ENCODE measurements at regions of chr1 and their contacts with region 1.

Region 1: GRCh38 chr1:35557292-35558063 is at the starts of genes KIAA0319L and NCDN:
- DNase-seq: peak; percentile 90 to 97 (median 94)
- ATAC-seq: peak; percentile 89
- H3K4me3 ChIP-seq: peak within 1 kb of the TSS; percentile 98
- H3K4me3 Mint-ChIP-seq: peak within 1 kb of the TSS; percentile 100
- H3K27ac ChIP-seq: peak within 1 kb of the TSS; percentile 77 to 84
- H3K27ac Mint-ChIP-seq: peak within 1 kb of the TSS; percentile 97
- H3K4me1 ChIP-seq: peaks cover 48% of the 10 kb centered on the region
- H3K4me1 Mint-ChIP-seq: peaks cover 75% of the 10 kb centered on the region
- H3K27me3 ChIP-seq: no peaks in the 10 kb centered on the region
- H3K27me3 Mint-ChIP-seq: no peaks in the 10 kb centered on the region
- CTCF ChIP-seq: no peak
- total RNA-seq, gene KIAA0319L: 50.9 to 53.3 TPM
- total RNA-seq, gene NCDN: 12.8 to 14.2 TPM

Region 2: DNA sequence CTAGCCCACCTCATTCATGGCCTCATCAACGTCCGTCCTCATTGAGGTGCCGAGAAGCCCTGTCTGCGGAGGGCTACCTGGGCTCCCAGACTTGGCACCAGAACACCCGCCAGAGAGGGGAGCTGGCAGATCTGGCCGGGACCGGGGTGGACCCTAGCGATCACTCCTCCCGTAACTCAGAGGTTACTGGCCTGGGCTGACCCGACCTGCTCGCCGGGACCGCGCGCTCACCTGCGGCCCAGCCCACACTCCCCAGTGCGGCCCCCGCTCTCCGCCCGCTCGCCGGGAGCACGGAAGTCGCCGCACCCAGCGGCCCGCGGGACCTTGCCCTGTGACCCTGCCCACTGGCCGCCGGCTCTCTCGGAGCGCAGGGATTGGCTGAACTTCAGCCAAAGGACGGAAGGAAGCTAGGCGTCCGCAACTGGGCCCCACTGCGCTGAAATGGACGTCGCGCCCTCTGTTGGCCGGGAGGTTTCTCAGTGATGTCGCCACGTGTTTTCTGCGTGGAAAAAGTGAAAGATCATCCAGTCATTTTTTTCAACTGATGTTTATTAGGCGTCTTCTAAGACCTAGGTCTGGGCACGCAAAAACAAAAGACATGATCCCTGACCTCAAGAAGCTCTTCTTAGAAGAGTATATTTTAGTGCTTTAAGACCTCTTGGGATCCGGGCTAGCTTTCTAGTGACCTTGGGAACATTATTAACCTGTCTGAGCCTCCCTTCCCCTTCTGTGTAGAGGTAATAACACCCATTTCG is 697.9 kb before region 1 on chr1 and contains the start of gene SMIM12:
- CTCF ChIA-PET with region 1: no interaction called
- POLR2A ChIA-PET with region 1: no interaction called
- intact Hi-C with region 1: loop called in 1 of 2 experiments (anchors 10 kb)
- DNase-seq: peak; percentile 75 to 94 (median 88)
- ATAC-seq: peak; percentile 83
- H3K4me3 ChIP-seq: peak within 1 kb of the TSS; percentile 98
- H3K4me3 Mint-ChIP-seq: peak within 1 kb of the TSS; percentile 93
- H3K27ac ChIP-seq: peak within 1 kb of the TSS; percentile 80 to 91
- H3K27ac Mint-ChIP-seq: peak within 1 kb of the TSS; percentile 88
- H3K4me1 ChIP-seq: peaks cover 48% of the 10 kb centered on the region
- H3K4me1 Mint-ChIP-seq: peaks cover 68% of the 10 kb centered on the region
- H3K27me3 ChIP-seq: no peaks in the 10 kb centered on the region
- H3K27me3 Mint-ChIP-seq: no peaks in the 10 kb centered on the region
- CTCF ChIP-seq: peak; percentile 83
- total RNA-seq, gene SMIM12: 43.0 to 44.6 TPM

Region 3: DNA sequence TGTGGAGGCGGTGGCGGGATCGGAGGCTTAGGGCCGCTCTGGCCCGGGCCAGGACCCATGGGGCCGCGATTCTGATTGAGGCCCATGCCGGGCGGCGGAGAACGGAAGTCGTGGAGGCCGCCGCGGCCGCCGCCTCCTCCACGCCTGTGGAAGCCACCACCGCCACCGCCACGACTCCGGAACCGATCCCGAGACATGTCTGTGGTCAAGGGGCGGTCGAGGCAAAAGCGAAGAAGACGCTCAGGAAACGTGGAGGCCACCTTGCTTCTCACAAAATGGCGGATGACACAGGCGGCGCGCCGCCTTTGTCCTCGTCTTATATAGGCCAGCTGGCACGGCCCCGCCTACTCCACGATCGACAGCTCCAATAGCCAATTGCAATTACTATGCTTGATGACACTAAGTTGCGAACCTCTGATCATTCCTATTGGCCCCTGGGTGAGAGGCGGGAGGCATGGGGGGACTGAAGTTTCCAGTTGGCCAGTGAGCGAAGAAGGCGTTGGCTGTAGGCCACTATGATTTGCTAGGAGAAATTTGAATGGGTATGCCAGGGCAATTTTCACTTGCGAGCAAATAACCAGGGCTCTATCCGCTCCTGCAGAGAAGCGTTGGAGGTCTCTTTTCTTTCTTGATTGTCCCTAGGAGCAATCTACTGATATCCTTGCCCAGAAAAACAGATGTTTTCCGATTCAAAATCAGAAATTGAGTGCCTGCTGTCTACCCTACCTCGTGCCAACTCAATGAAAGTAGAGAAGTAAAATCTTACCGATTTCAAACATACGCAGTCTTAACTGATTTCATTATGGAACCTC is 364.4 kb before region 1 on chr1 and contains the start of gene SFPQ:
- CTCF ChIA-PET with region 1: no interaction called
- POLR2A ChIA-PET with region 1: interaction called, 5 read pairs
- intact Hi-C with region 1: loop called in 1 of 2 experiments (anchors 5 kb)
- DNase-seq: peak; percentile 95 to 99 (median 97)
- ATAC-seq: peak; percentile 88
- H3K4me3 ChIP-seq: peak within 1 kb of the TSS; percentile 95
- H3K4me3 Mint-ChIP-seq: peak within 1 kb of the TSS; percentile 97
- H3K27ac ChIP-seq: peak within 1 kb of the TSS; percentile 98 to 99
- H3K27ac Mint-ChIP-seq: peak within 1 kb of the TSS; percentile 97
- H3K4me1 ChIP-seq: peaks cover 32% of the 10 kb centered on the region
- H3K4me1 Mint-ChIP-seq: peaks cover 53% of the 10 kb centered on the region
- H3K27me3 ChIP-seq: no peaks in the 10 kb centered on the region
- H3K27me3 Mint-ChIP-seq: no peaks in the 10 kb centered on the region
- CTCF ChIP-seq: no peak
- total RNA-seq, gene SFPQ: 766 to 767 TPM

Region 4: GRCh38 chr1:35505908-35506798 is 51.3 kb before region 1 on chr1:
- CTCF ChIA-PET with region 1: no interaction called
- POLR2A ChIA-PET with region 1: interaction called, 27 read pairs
- intact Hi-C with region 1: loop called in 1 of 2 experiments (anchors 2 kb)
- DNase-seq: peak; percentile 26 to 89 (median 40)
- ATAC-seq: peak; percentile 77
- H3K4me3 ChIP-seq: peak overlapping the region; percentile 24
- H3K4me3 Mint-ChIP-seq: peak overlapping the region; percentile 62
- H3K27ac ChIP-seq: peak overlapping the region; percentile 72 to 81
- H3K27ac Mint-ChIP-seq: peak overlapping the region; percentile 88
- H3K4me1 ChIP-seq: peaks cover 41% of the 10 kb centered on the region
- H3K4me1 Mint-ChIP-seq: peaks cover 82% of the 10 kb centered on the region
- H3K27me3 ChIP-seq: no peaks in the 10 kb centered on the region
- H3K27me3 Mint-ChIP-seq: no peaks in the 10 kb centered on the region
- CTCF ChIP-seq: no peak

Region 5: DNA sequence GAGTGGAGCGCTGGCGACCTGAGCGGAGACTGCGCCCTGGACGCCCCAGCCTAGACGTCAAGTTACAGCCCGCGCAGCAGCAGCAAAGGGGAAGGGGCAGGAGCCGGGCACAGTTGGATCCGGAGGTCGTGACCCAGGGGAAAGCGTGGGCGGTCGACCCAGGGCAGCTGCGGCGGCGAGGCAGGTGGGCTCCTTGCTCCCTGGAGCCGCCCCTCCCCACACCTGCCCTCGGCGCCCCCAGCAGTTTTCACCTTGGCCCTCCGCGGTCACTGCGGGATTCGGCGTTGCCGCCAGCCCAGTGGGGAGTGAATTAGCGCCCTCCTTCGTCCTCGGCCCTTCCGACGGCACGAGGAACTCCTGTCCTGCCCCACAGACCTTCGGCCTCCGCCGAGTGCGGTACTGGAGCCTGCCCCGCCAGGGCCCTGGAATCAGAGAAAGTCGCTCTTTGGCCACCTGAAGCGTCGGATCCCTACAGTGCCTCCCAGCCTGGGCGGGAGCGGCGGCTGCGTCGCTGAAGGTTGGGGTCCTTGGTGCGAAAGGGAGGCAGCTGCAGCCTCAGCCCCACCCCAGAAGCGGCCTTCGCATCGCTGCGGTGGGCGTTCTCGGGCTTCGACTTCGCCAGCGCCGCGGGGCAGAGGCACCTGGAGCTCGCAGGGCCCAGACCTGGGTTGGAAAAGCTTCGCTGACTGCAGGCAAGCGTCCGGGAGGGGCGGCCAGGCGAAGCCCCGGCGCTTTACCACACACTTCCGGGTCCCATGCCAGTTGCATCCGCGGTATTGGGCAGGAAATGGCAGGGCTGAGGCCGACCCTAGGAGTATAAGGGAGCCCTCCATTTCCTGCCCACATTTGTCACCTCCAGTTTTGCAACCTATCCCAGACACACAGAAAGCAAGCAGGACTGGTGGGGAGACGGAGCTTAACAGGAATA is 19.9 kb after region 1 on chr1:
- CTCF ChIA-PET with region 1: no interaction called
- POLR2A ChIA-PET with region 1: interaction called, 20 read pairs
- intact Hi-C with region 1: no loop called
- DNase-seq: peak; percentile 35 to 88 (median 59)
- ATAC-seq: peak; percentile 80
- H3K4me3 ChIP-seq: peak overlapping the region; percentile 81
- H3K4me3 Mint-ChIP-seq: peak overlapping the region; percentile 90
- H3K27ac ChIP-seq: no peak overlapping the region
- H3K27ac Mint-ChIP-seq: peak overlapping the region; percentile 12
- H3K4me1 ChIP-seq: peaks cover 31% of the 10 kb centered on the region
- H3K4me1 Mint-ChIP-seq: peaks cover 26% of the 10 kb centered on the region
- H3K27me3 ChIP-seq: peaks cover 0 to 2% of the 10 kb centered on the region in 2 experiments
- H3K27me3 Mint-ChIP-seq: peaks cover 5% of the 10 kb centered on the region
- CTCF ChIP-seq: no peak

Measured in CD4-positive, alpha-beta T cell (primary cell).